Astrocyte of the cerebellum (primary cell): ENCODE measurements at regions of chr15 and their contacts with region 1.

Region 1: GRCh38 chr15:31111091-31111647 is 9.6 kb upstream of the TRPM1 start:
- DNase-seq: no peak
- H3K4me3 ChIP-seq: no peak overlapping the region
- CTCF ChIP-seq: no peak

Region 2: GRCh38 chr15:31024330-31024729 is 86.8 kb before region 1 on chr15:
- in situ Hi-C with region 1: loop called (anchors 5 kb)
- DNase-seq: peak; percentile 98
- H3K4me3 ChIP-seq: no peak overlapping the region
- CTCF ChIP-seq: no peak

Region 3: GRCh38 chr15:31372635-31373091 is 261.5 kb after region 1 on chr15:
- in situ Hi-C with region 1: no loop called
- DNase-seq: no peak
- H3K4me3 ChIP-seq: no peak overlapping the region
- CTCF ChIP-seq: no peak